Naive thymus-derived CD4-positive, alpha-beta T cell (primary cell): ENCODE measurements at regions of chr13 and their contacts with region 1.

Region 1: GRCh38 chr13:22061351-22061805 is 390.5 kb downstream of the FGF9 start:
- DNase-seq: peak; percentile 19 to 74 (median 58)
- ATAC-seq: peak; percentile 76
- H3K4me3 ChIP-seq: peak overlapping the region; percentile 29
- H3K4me3 Mint-ChIP-seq: peak overlapping the region; percentile 39 to 83 (median 60)
- H3K27ac ChIP-seq: peak overlapping the region; percentile 81
- H3K27ac Mint-ChIP-seq: peak overlapping the region; percentile 94 to 100 (median 98)
- H3K4me1 ChIP-seq: peaks cover 57 to 70% of the 10 kb centered on the region in 2 donors
- H3K4me1 Mint-ChIP-seq: peaks cover 50 to 89% (median 83%) of the 10 kb centered on the region in 7 donors
- H3K27me3 ChIP-seq: no peaks in the 10 kb centered on the region
- H3K27me3 Mint-ChIP-seq: no peaks in the 10 kb centered on the region

Region 2: GRCh38 chr13:21348488-21349120 is 712.8 kb before region 1 on chr13:
- CTCF ChIA-PET with region 1: no interaction called
- POLR2A ChIA-PET with region 1: no interaction called
- intact Hi-C with region 1: no loop called
- DNase-seq: no peak
- ATAC-seq: no peak
- H3K4me3 ChIP-seq: no peak overlapping the region
- H3K4me3 Mint-ChIP-seq: no peak overlapping the region
- H3K27ac ChIP-seq: no peak overlapping the region
- H3K27ac Mint-ChIP-seq: peak overlapping the region in 3 of 9 donors; percentile 9 to 40 (median 22)
- H3K4me1 ChIP-seq: peaks cover 10 to 17% of the 10 kb centered on the region in 2 donors
- H3K4me1 Mint-ChIP-seq: peaks cover 8 to 21% (median 20%) of the 10 kb centered on the region in 7 donors
- H3K27me3 ChIP-seq: no peaks in the 10 kb centered on the region
- H3K27me3 Mint-ChIP-seq: no peaks in the 10 kb centered on the region

Region 3: DNA sequence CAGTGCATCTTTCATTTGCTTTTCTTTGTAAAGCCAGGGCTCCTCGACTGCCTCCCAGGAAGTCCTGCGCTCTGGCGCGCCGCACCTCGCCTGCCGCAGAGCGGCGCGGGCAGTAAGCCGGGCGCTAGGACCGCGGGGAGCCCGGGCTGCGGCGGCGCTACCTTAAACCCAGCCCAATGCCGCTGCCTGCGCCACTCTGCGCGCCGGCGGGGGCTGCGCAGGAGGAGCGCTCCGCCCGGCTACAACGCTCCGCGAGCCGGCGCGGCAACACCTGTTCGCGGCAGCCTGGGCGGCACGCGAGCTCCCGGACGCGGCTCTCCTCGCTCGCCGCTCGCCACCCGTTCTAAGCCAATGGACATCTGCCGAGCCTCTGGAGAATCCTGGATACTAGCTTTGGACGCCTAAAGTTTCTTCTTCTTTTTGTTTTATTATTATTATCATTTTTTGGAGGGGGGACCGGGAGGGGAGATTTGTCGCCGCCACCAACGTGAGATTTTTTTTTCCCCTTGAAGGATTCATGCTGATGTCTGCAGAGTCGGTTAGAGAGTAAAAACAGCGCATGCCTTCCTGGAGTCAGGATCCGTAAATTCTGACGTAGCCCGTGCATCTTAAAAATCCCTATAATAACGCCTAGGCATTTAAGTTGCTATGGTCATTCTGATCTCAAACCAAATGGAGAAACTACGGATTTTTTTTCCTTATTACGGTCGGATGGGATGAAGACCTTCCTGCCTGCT is 390.3 kb before region 1 on chr13 and contains the start of gene FGF9:
- CTCF ChIA-PET with region 1: interaction called, 4 read pairs
- POLR2A ChIA-PET with region 1: interaction called, 5 read pairs
- intact Hi-C with region 1: loop called (anchors 1 to 2 kb)
- DNase-seq: peak; percentile 76 to 88 (median 86)
- ATAC-seq: peak; percentile 89
- H3K4me3 ChIP-seq: peak within 1 kb of the TSS; percentile 92
- H3K4me3 Mint-ChIP-seq: peak within 1 kb of the TSS; percentile 88 to 98 (median 93)
- H3K27ac ChIP-seq: peak within 1 kb of the TSS; percentile 48
- H3K27ac Mint-ChIP-seq: peak within 1 kb of the TSS; percentile 61 to 94 (median 78)
- H3K4me1 ChIP-seq: peaks cover 19 to 32% of the 10 kb centered on the region in 2 donors
- H3K4me1 Mint-ChIP-seq: peaks cover 27 to 45% (median 44%) of the 10 kb centered on the region in 7 donors
- H3K27me3 ChIP-seq: peaks cover 0 to 4% of the 10 kb centered on the region in 2 donors
- H3K27me3 Mint-ChIP-seq: peaks cover 5 to 77% (median 20%) of the 10 kb centered on the region in 5 donors
- total RNA-seq, gene FGF9: 0.19 to 5.6 (median 2.0) TPM

Region 4: GRCh38 chr13:22017226-22017625 is 44.2 kb before region 1 on chr13:
- CTCF ChIA-PET with region 1: no interaction called
- POLR2A ChIA-PET with region 1: no interaction called
- intact Hi-C with region 1: loop called in 1 of 2 experiments (anchors 5 kb)
- DNase-seq: peak in 2 of 9 donors; percentile 4 to 10
- ATAC-seq: peak; percentile 47
- H3K4me3 ChIP-seq: no peak overlapping the region
- H3K4me3 Mint-ChIP-seq: no peak overlapping the region
- H3K27ac ChIP-seq: no peak overlapping the region
- H3K27ac Mint-ChIP-seq: peak overlapping the region in 3 of 9 donors; percentile 1 to 46 (median 5)
- H3K4me1 ChIP-seq: no peaks in the 10 kb centered on the region
- H3K4me1 Mint-ChIP-seq: peaks cover 5 to 14% (median 10%) of the 10 kb centered on the region in 7 donors
- H3K27me3 ChIP-seq: no peaks in the 10 kb centered on the region
- H3K27me3 Mint-ChIP-seq: no peaks in the 10 kb centered on the region

Region 5: DNA sequence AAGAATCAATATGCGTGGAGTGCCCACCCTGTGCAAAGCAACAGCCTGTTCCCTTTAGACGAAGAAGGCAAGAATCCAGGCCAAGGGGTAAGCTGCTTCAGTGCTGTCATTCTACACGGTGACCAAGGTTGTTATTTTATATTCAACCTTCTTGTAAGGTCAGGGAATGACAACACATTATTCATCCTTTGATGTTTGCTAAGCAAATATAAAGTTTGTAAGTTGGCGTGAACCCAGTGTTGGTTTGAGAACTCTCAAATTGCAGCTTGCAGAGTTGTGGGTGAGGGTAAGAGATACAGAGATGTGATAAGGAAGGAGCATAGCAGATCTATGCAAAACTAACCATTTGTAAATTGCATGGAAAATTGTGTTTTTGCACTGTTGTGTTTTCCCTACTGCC is 46.2 kb after region 1 on chr13:
- CTCF ChIA-PET with region 1: no interaction called
- POLR2A ChIA-PET with region 1: no interaction called
- intact Hi-C with region 1: loop called (anchors 2 kb)
- DNase-seq: peak in 1 of 9 donors; percentile 11
- ATAC-seq: no peak
- H3K4me3 ChIP-seq: no peak overlapping the region
- H3K4me3 Mint-ChIP-seq: peak overlapping the region in 6 of 10 donors; percentile 7 to 66 (median 40)
- H3K27ac ChIP-seq: no peak overlapping the region
- H3K27ac Mint-ChIP-seq: peak overlapping the region in 7 of 9 donors; percentile 5 to 80 (median 38)
- H3K4me1 ChIP-seq: peaks cover 23% of the 10 kb centered on the region in 2 donors
- H3K4me1 Mint-ChIP-seq: peaks cover 14 to 60% (median 37%) of the 10 kb centered on the region in 7 donors
- H3K27me3 ChIP-seq: no peaks in the 10 kb centered on the region
- H3K27me3 Mint-ChIP-seq: peaks cover 0 to 2% (median 0%) of the 10 kb centered on the region in 5 donors

Region 6: GRCh38 chr13:22161871-22162270 is 100.5 kb after region 1 on chr13:
- CTCF ChIA-PET with region 1: no interaction called
- POLR2A ChIA-PET with region 1: no interaction called
- intact Hi-C with region 1: loop called (anchors 1 to 10 kb)
- DNase-seq: peak in 5 of 9 donors; percentile 8 to 56 (median 24)
- ATAC-seq: peak; percentile 64
- H3K4me3 ChIP-seq: peak overlapping the region; percentile 17
- H3K4me3 Mint-ChIP-seq: peak overlapping the region; percentile 4 to 87 (median 55)
- H3K27ac ChIP-seq: peak overlapping the region; percentile 23
- H3K27ac Mint-ChIP-seq: peak overlapping the region in 7 of 9 donors; percentile 1 to 81 (median 35)
- H3K4me1 ChIP-seq: peaks cover 8 to 11% of the 10 kb centered on the region in 2 donors
- H3K4me1 Mint-ChIP-seq: peaks cover 16 to 60% (median 34%) of the 10 kb centered on the region in 7 donors
- H3K27me3 ChIP-seq: no peaks in the 10 kb centered on the region
- H3K27me3 Mint-ChIP-seq: no peaks in the 10 kb centered on the region

Region 7: GRCh38 chr13:22214184-22214583 is 152.8 kb after region 1 on chr13:
- CTCF ChIA-PET with region 1: no interaction called
- POLR2A ChIA-PET with region 1: no interaction called
- intact Hi-C with region 1: loop called in 1 of 2 experiments (anchors 2 kb)
- DNase-seq: peak in 6 of 9 donors; percentile 2 to 45 (median 24)
- ATAC-seq: peak; percentile 54
- H3K4me3 ChIP-seq: no peak overlapping the region
- H3K4me3 Mint-ChIP-seq: peak overlapping the region in 6 of 10 donors; percentile 8 to 58 (median 46)
- H3K27ac ChIP-seq: no peak overlapping the region
- H3K27ac Mint-ChIP-seq: peak overlapping the region in 7 of 9 donors; percentile 30 to 73 (median 65)
- H3K4me1 ChIP-seq: peaks cover 0 to 4% of the 10 kb centered on the region in 2 donors
- H3K4me1 Mint-ChIP-seq: peaks cover 4 to 59% (median 35%) of the 10 kb centered on the region in 7 donors
- H3K27me3 ChIP-seq: no peaks in the 10 kb centered on the region
- H3K27me3 Mint-ChIP-seq: no peaks in the 10 kb centered on the region